ENCODE measurements at regions of chr1 and their contacts with region 1.

Region 1: DNA sequence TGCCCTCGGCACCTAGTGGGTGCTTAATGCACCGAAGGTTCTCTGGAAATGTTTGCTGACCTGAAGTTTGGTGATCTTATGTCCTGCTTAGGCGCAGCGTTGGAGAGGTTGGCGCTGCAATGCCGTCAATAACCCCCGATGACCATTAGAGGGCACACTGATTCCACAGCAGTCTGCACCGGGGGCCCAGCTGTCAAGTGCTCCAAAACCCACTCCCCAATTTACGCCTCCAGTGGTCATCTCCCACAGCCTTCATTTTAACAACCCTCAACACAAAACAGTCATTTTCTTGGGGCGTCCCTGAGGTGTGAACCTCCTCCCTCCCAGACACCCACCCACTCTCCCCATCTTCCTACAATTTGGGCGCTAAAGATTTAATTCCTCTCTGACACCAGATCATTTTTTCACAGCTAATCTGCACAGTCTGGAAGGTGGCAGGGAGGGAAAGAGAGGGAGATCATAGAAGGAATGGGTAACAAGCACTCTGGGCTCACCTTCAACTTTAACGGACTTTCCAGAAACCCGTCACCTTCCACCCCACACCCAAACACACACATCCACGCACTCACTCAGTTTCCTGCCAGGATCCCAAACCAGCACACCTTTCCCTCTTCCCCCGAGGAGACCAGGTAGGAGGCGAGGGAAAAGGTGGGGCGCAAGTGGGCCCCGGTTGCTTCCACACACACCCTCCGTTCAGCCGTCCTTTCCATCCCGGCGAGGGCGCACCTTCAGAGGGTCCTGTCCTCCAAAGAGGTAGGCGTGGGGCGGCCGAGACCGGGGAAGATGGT is 576 bp upstream of the NPR1 start:
- DNase-seq: peak in 1 of 2 experiments; percentile 82
- H3K4me3 ChIP-seq: peak overlapping the region; percentile 38 to 76 (median 69)
- H3K27ac ChIP-seq: no peak overlapping the region
- H3K4me1 ChIP-seq: peaks cover 3 to 9% (median 6%) of the 10 kb centered on the region in 4 experiments; a peak in 6 of 7 replicates
- H3K27me3 ChIP-seq: peaks cover 0 to 21% (median 9%) of the 10 kb centered on the region in 4 experiments; a peak in 5 of 7 replicates
- CTCF ChIP-seq: peak; percentile 97 to 98 (median 98)
- EP300 ChIP-seq: no peak
- POLR2A ChIP-seq: no peak
- RAD21 ChIP-seq: peak; percentile 94 to 95

Region 2: GRCh38 chr1:153688276-153688675 is 10.4 kb after region 1 on chr1:
- CTCF ChIA-PET with region 1: interaction called, 12 read pairs
- POLR2A ChIA-PET with region 1: no interaction called
- DNase-seq: no peak
- H3K4me3 ChIP-seq: no peak overlapping the region
- H3K27ac ChIP-seq: no peak overlapping the region
- H3K4me1 ChIP-seq: no peaks in the 10 kb centered on the region
- H3K27me3 ChIP-seq: no peaks in the 10 kb centered on the region
- CTCF ChIP-seq: no peak
- EP300 ChIP-seq: no peak
- POLR2A ChIP-seq: no peak
- RAD21 ChIP-seq: no peak

Region 3: DNA sequence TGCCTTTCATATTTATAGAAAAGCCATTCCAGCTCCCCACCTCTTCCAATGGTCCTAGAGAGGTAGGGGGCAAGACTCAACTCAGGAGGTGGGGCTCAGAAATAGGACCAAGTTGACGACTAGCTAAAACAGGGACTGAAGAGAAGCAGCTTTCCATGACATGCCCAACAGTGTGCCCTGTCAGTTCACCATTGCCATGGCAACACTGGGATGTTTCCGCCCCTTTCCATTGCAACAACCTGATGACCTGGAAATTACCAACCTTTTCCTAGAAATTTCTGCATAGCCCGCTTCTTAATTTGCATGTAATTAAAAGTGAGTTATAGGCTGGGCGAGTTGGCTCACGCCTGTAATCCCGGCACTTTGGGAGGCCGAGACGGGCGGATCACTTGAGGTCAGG is 27.6 kb after region 1 on chr1:
- CTCF ChIA-PET with region 1: interaction called, 45 read pairs
- POLR2A ChIA-PET with region 1: no interaction called
- DNase-seq: no peak
- H3K4me3 ChIP-seq: no peak overlapping the region
- H3K27ac ChIP-seq: no peak overlapping the region
- H3K4me1 ChIP-seq: no peaks in the 10 kb centered on the region
- H3K27me3 ChIP-seq: no peaks in the 10 kb centered on the region
- CTCF ChIP-seq: no peak
- EP300 ChIP-seq: no peak
- POLR2A ChIP-seq: no peak
- RAD21 ChIP-seq: no peak

Region 4: DNA sequence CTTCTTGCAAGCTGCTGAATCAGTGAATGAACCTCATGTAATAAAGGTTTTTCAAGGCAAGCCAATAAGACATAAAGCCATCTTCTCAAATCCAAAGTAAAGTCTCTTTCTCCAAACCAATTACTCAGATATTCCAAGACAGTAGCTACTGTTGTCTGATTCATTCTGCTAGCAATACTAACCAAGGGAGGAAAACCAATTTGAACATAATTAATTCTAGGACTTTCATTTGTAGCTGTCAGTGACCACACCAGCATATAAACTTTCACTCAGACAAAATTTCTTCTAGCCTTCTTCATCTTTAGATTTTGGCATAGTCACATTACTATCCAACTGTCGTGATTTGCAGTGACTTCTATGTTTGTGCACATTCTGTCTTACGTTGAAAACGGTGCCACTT is 39.4 kb after region 1 on chr1:
- CTCF ChIA-PET with region 1: interaction called, 45 read pairs
- POLR2A ChIA-PET with region 1: interaction called, 5 read pairs
- DNase-seq: no peak
- H3K4me3 ChIP-seq: no peak overlapping the region
- H3K27ac ChIP-seq: no peak overlapping the region
- H3K4me1 ChIP-seq: no peaks in the 10 kb centered on the region
- H3K27me3 ChIP-seq: no peaks in the 10 kb centered on the region
- CTCF ChIP-seq: no peak
- EP300 ChIP-seq: no peak
- POLR2A ChIP-seq: no peak
- RAD21 ChIP-seq: no peak

Region 5: DNA sequence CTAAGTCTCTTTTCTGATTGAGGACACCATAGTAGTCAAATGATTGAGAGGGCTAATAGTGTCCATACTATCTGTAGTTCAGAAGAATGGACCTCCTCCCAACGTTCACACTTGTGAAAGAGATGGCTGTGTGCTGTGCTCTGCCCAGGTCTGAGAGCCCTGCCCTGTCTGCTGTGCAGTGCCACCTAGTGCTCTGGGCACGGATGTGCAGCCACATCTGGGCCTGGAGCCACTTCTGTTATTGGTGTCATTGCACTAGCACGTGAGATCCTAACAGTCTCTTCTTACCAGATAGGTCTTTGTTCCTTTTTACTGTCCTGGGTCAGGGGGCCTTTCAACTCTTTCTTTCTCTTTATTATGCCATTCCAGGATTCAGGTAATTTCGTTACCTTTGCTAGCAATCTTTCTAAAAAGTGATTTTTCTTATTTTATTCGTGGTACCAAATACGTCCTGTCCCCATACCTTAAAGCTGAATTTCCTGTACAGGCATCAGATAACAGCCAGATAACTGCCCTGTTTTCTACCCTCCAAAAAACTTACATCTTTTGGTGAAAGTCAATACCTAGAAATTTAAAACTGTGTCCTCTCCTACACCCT is 71.6 kb after region 1 on chr1:
- CTCF ChIA-PET with region 1: interaction called, 190 read pairs
- POLR2A ChIA-PET with region 1: interaction called, 6 read pairs
- DNase-seq: peak; percentile 49 to 85
- H3K4me3 ChIP-seq: no peak overlapping the region
- H3K27ac ChIP-seq: no peak overlapping the region
- H3K4me1 ChIP-seq: peaks cover 3 to 34% (median 15%) of the 10 kb centered on the region in 4 experiments; a peak in 6 of 7 replicates
- H3K27me3 ChIP-seq: peaks cover 0 to 2% (median 0%) of the 10 kb centered on the region in 4 experiments; a peak in 1 of 7 replicates
- CTCF ChIP-seq: peak; percentile 94 to 99 (median 99)
- EP300 ChIP-seq: no peak
- POLR2A ChIP-seq: no peak
- RAD21 ChIP-seq: peak; percentile 92 to 94

Measured in H1 (cell line).